OCI-LY7 (cell line): ENCODE measurements at regions of chrX and their contacts with region 1.

Region 1: GRCh38 chrX:127702526-127702925 is 349.7 kb downstream of the ACTRT1 start:
- DNase-seq: no peak
- H3K4me3 ChIP-seq: no peak overlapping the region
- H3K27ac ChIP-seq: no peak overlapping the region
- H3K4me1 ChIP-seq: no peaks in the 10 kb centered on the region
- CTCF ChIP-seq: no peak

Region 2: GRCh38 chrX:127726227-127726626 is 23.7 kb after region 1 on chrX:
- CTCF ChIA-PET with region 1: no interaction called
- POLR2A ChIA-PET with region 1: no interaction called
- intact Hi-C with region 1: loop called (anchors 2 kb)
- DNase-seq: no peak
- H3K4me3 ChIP-seq: no peak overlapping the region
- H3K27ac ChIP-seq: no peak overlapping the region
- H3K4me1 ChIP-seq: no peaks in the 10 kb centered on the region
- CTCF ChIP-seq: no peak